ENCODE measurements at regions of chr11 and their contacts with region 1.

Region 1: DNA sequence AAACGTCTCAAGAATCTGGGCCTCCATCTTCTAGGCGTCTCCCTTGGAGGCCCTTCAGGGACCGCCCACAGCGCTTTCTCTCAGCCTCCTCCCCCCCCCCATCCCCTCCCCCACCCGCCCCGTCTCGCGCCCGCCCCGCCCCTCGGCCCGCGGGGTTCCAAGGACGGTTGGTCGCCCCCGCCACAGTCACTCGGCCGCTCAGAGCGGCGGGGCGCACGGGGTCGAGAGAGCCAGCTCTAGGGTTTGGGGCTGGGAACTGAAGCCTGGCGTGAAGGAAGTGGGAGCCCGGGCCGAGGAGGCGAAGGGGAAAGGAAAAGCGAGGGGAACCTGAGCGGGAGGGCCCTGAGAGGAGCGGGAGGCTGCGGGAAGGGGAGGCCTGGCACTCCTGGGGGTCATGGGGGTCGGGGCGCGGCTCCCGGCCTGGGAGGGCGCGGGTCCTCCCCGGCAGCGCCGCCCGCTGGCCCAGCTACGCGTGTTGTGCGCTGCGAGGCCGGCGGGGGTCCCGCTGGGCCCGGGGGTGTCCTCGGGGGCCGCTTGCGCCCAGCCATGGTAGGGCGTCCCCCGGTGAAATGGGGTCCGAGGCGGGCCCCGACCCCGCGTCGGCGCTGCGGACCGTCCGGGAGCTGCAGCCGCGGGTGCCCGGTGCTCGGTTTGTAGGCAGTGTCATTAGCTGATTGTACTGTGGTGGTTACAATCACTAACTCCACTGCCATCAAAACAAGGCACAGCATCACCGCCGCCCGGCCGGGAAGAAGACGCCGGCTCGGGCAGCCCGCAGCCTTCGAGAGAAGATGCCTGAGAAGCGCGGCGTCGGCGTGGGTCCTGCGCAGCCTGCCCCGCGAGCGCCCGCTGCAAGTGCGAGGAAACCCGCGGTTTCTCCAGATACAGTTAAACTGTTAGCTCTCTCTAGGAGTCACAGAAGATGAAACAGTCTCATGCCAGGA is at the start of gene BTG4:
- DNase-seq: peak; percentile 62
- ATAC-seq: peak; percentile 65
- H3K4me3 Mint-ChIP-seq: peak within 1 kb of the TSS; percentile 89
- H3K27ac Mint-ChIP-seq: peak within 1 kb of the TSS; percentile 88
- H3K4me1 Mint-ChIP-seq: peaks cover 21% of the 10 kb centered on the region
- H3K27me3 Mint-ChIP-seq: peaks cover 35% of the 10 kb centered on the region
- total RNA-seq, gene BTG4: 0.31 TPM in 1 of 2 experiments, not detected in the other

Region 2: DNA sequence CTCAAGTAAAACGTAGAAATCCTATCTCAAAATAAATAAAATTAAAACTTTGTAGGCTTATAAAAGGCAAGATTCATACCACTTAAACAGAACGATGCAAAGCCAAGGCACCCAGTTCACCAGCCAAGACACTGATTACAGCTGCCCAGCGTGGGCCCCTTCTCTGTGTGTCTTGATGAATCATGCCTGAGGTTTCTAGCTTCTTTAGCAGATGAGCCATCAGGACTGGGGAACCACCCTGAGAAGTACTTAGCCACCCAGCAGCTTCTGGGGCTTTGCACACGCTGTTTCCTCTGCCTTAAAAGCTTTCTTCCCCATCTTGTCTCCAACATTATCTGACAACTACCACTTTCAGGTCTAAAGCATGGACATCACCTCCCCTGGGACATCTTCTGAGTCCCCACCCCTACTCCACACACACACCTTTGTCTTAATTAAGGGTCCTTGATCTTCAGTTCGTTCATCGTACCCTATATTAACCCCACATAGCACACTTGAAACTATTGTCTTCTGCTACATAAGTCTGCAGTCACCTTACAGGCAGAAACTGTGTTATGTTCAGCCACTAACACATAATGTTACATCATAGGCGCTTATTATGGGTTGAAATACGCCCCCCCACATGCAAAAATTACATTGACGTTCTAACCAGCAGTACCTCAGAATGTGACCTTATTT is 19.3 kb after region 1 on chr11:
- POLR2A ChIA-PET with region 1: interaction called, 40 read pairs
- DNase-seq: peak; percentile 56
- ATAC-seq: peak; percentile 98
- H3K4me3 Mint-ChIP-seq: peak overlapping the region; percentile 55
- H3K27ac Mint-ChIP-seq: peak overlapping the region; percentile 95
- H3K4me1 Mint-ChIP-seq: peaks cover 39% of the 10 kb centered on the region
- H3K27me3 Mint-ChIP-seq: peaks cover 14% of the 10 kb centered on the region